Activated CD4-positive, alpha-beta memory T cell treated with anti-CD3 and anti-CD28 coated beads, Interleukin-2, amount 10 ng/mL, durations not matched to agents 7 days and 5 days (primary cell): ENCODE measurements at regions of chr1 and their contacts with region 1.

Region 1: GRCh38 chr1:235617808-235618207 is 31.8 kb downstream of the GNG4 start:
- DNase-seq: no peak
- H3K4me3 Mint-ChIP-seq: no peak overlapping the region
- H3K27ac Mint-ChIP-seq: no peak overlapping the region
- H3K4me1 Mint-ChIP-seq: no peaks in the 10 kb centered on the region
- H3K27me3 Mint-ChIP-seq: peaks cover 3% of the 10 kb centered on the region

Region 2: DNA sequence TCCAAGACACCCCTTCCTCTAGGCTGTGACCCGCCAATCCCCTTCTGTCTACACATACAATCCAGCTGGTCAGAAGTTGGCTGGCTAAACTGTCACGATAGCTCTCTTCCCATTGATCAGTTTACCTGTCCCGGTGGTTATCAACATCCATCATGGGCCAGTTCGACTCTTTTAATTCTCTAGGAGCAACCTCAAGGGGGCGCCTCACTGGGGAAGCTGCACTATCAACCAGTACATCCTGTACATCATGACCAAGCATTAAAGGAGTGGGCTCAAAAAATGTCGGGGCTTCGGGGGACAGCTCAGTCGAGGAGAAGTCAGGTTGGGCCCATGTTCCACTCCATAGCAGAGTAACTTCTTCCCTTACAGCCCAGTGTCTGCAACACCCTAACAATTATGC is 60.3 kb before region 1 on chr1:
- CTCF ChIA-PET with region 1: no interaction called
- POLR2A ChIA-PET with region 1: no interaction called
- DNase-seq: peak; percentile 33
- H3K4me3 Mint-ChIP-seq: no peak overlapping the region
- H3K27ac Mint-ChIP-seq: no peak overlapping the region
- H3K4me1 Mint-ChIP-seq: no peaks in the 10 kb centered on the region
- H3K27me3 Mint-ChIP-seq: no peaks in the 10 kb centered on the region

Region 3: DNA sequence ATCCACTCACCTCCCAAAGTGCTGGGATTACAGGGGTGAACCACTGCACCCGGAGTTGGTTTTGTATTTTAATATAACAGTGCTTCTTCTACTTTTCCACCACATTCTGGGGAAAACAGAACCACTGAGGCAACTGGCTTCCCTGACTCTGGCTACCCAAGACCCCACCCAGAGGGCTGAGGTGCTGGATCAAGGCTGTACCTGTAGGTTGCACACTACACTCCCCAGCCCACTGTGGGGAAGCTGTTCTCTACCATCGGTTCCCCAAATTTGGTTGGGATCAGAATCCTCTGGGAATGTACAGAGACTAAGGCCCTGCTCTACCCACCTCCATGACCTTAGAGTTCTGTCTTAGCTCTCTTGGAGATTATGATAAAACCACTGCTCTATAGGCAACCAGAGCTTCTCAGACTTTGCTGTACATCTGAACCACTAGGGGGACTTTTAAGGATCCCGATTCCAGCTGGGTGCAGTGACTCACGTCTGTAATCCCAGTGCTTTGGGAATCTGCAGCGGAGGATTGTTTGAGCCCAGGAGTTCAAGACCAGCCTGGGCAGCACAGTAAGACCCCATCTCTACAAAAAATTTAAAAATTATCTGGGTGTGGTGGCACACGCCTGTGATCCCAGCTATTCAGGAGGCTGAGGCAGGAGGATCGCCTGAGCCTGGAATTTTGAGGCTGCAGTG is 19.8 kb before region 1 on chr1:
- CTCF ChIA-PET with region 1: interaction called, 13 read pairs
- POLR2A ChIA-PET with region 1: no interaction called
- DNase-seq: no peak
- H3K4me3 Mint-ChIP-seq: no peak overlapping the region
- H3K27ac Mint-ChIP-seq: no peak overlapping the region
- H3K4me1 Mint-ChIP-seq: peaks cover 6% of the 10 kb centered on the region
- H3K27me3 Mint-ChIP-seq: peaks cover 7% of the 10 kb centered on the region

Region 4: DNA sequence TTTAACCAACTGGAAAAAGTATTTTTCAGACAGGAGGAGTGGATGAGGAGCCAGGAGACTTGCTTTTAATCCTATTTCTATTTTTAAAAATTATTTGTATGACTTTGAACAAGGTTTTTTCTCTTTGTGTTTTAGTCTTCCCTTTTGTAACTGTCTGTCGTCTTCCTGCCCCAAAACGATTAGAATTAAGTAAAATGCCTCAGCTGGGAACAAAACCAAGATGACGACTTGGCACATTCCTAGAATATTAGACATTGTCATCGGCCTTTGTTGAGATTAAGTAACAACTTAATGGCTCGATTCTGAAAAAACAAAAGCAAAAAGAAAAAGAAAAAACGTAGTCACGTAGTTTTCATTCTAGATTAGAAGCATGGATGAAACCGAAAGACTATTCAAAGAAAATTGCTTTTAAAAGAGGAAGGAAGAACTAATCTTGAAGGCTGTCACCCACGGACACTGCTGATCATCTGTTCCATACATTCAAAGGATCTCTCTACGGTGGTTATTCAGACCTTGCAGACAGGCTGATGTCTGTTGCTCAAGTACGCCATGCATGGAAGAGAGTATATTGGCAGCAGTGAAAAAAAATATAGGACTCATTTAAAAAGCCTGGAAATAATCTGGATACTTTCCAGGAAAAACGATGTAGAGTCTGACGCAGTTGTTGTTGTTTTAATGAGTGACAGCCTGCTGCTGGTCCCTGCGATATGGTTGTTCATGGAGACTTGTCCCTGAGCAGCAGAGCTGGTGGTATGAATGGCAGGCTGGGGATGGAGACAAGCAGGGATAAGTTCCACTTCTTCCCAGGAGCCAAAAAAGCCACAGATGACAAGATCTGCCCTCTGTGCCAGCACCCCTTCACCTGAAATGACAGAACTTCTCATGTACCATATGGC is 14.9 kb after region 1 on chr1:
- CTCF ChIA-PET with region 1: no interaction called
- POLR2A ChIA-PET with region 1: no interaction called
- DNase-seq: no peak
- H3K4me3 Mint-ChIP-seq: peak overlapping the region; percentile 26
- H3K27ac Mint-ChIP-seq: no peak overlapping the region
- H3K4me1 Mint-ChIP-seq: peaks cover 10% of the 10 kb centered on the region
- H3K27me3 Mint-ChIP-seq: peaks cover 7% of the 10 kb centered on the region